CD8-positive, alpha-beta memory T cell (primary cell): ENCODE measurements at regions of chr3 and their contacts with region 1.

Region 1: GRCh38 chr3:52154117-52155094 is at the start of gene POC1A:
- DNase-seq: peak; percentile 77 to 88 (median 82)
- H3K4me3 ChIP-seq: peak within 1 kb of the TSS; percentile 95
- H3K4me3 Mint-ChIP-seq: peak within 1 kb of the TSS; percentile 92 to 98 (median 95)
- H3K27ac ChIP-seq: peak within 1 kb of the TSS; percentile 84
- H3K27ac Mint-ChIP-seq: peak within 1 kb of the TSS; percentile 92 to 99 (median 96)
- H3K4me1 ChIP-seq: peaks cover 10% of the 10 kb centered on the region
- H3K4me1 Mint-ChIP-seq: peaks cover 7 to 17% (median 8%) of the 10 kb centered on the region in 3 donors
- H3K27me3 ChIP-seq: no peaks in the 10 kb centered on the region
- H3K27me3 Mint-ChIP-seq: no peaks in the 10 kb centered on the region
- total RNA-seq, gene POC1A: 22.6 to 22.7 TPM

Region 2: GRCh38 chr3:51995346-51996163 is 158.9 kb before region 1 on chr3 and contains the start of gene RPL29:
- CTCF ChIA-PET with region 1: interaction called, 4 read pairs
- POLR2A ChIA-PET with region 1: interaction called, 11 read pairs
- DNase-seq: peak; percentile 84 to 91 (median 90)
- H3K4me3 ChIP-seq: peak within 1 kb of the TSS; percentile 97
- H3K4me3 Mint-ChIP-seq: peak within 1 kb of the TSS; percentile 94 to 100 (median 100)
- H3K27ac ChIP-seq: peak within 1 kb of the TSS; percentile 91
- H3K27ac Mint-ChIP-seq: peak within 1 kb of the TSS; percentile 91 to 100 (median 100)
- H3K4me1 ChIP-seq: peaks cover 17% of the 10 kb centered on the region
- H3K4me1 Mint-ChIP-seq: peaks cover 30 to 49% (median 46%) of the 10 kb centered on the region in 3 donors
- H3K27me3 ChIP-seq: no peaks in the 10 kb centered on the region
- H3K27me3 Mint-ChIP-seq: peaks cover 0 to 1% of the 10 kb centered on the region in 2 donors
- total RNA-seq, gene RPL29: 1,367 to 1,382 TPM

Region 3: GRCh38 chr3:52070724-52071621 is 83.4 kb before region 1 on chr3:
- CTCF ChIA-PET with region 1: no interaction called
- POLR2A ChIA-PET with region 1: no interaction called
- DNase-seq: no peak
- H3K4me3 ChIP-seq: no peak overlapping the region
- H3K4me3 Mint-ChIP-seq: no peak overlapping the region
- H3K27ac ChIP-seq: no peak overlapping the region
- H3K27ac Mint-ChIP-seq: peak overlapping the region in 2 of 8 donors; percentile 42 to 63
- H3K4me1 ChIP-seq: no peaks in the 10 kb centered on the region
- H3K4me1 Mint-ChIP-seq: peaks cover 3 to 16% (median 5%) of the 10 kb centered on the region in 3 donors
- H3K27me3 ChIP-seq: no peaks in the 10 kb centered on the region
- H3K27me3 Mint-ChIP-seq: no peaks in the 10 kb centered on the region

Region 4: GRCh38 chr3:52204337-52205073 is 50.1 kb after region 1 on chr3:
- CTCF ChIA-PET with region 1: no interaction called
- POLR2A ChIA-PET with region 1: no interaction called
- DNase-seq: no peak
- H3K4me3 ChIP-seq: no peak overlapping the region
- H3K4me3 Mint-ChIP-seq: peak overlapping the region in 2 of 7 donors; percentile 34 to 61
- H3K27ac ChIP-seq: no peak overlapping the region
- H3K27ac Mint-ChIP-seq: peak overlapping the region in 5 of 8 donors; percentile 5 to 73 (median 7)
- H3K4me1 ChIP-seq: peaks cover 10% of the 10 kb centered on the region
- H3K4me1 Mint-ChIP-seq: peaks cover 16 to 41% (median 27%) of the 10 kb centered on the region in 3 donors
- H3K27me3 ChIP-seq: no peaks in the 10 kb centered on the region
- H3K27me3 Mint-ChIP-seq: no peaks in the 10 kb centered on the region